HepG2 (cell line): ENCODE measurements at regions of chr6 and their contacts with region 1.

Region 1: GRCh38 chr6:37232430-37233017 is 25.0 kb upstream of the TBC1D22B start:
- DNase-seq: no peak
- ATAC-seq: no peak
- H3K4me3 ChIP-seq: no peak overlapping the region
- H3K27ac ChIP-seq: no peak overlapping the region
- H3K4me1 ChIP-seq: peaks cover 12% of the 10 kb centered on the region
- H3K27me3 ChIP-seq: no peaks in the 10 kb centered on the region
- CTCF ChIP-seq: no peak
- EP300 ChIP-seq: no peak
- POLR2A ChIP-seq: no peak
- RAD21 ChIP-seq: no peak

Region 2: DNA sequence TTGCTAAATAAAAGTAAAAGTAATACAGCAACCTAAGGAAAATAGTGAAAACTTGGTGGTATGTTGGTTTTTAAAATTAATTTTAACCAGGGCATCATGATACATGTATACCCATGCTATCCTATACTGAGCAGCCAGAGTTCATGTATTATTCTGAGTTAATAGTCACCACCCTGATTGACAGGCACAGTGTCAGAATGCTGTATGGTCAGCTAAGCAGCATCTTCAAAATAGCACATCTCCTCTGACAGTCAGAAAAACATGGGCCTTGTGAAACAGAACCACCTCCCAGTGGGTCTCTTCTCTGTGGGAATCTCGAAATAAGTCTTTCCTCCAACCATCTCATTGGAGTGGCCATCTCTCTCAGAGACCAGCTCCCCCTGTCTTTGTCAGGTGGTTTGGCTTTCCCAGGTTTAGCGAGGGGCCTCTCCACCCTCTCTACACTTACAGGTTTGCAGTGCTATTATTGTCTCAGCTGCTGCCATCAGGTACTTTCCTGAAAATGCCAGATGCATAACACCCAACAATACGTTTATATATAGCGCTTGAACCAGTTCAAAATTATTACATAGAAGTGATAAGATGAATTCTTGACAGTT is 74.2 kb after region 1 on chr6:
- CTCF ChIA-PET with region 1: no interaction called
- POLR2A ChIA-PET with region 1: no interaction called
- in situ Hi-C with region 1: no loop called
- intact Hi-C with region 1: loop called (anchors 2 kb)
- DNase-seq: no peak
- ATAC-seq: no peak
- H3K4me3 ChIP-seq: no peak overlapping the region
- H3K27ac ChIP-seq: no peak overlapping the region
- H3K4me1 ChIP-seq: no peaks in the 10 kb centered on the region
- H3K27me3 ChIP-seq: no peaks in the 10 kb centered on the region
- CTCF ChIP-seq: no peak
- EP300 ChIP-seq: no peak
- POLR2A ChIP-seq: no peak
- RAD21 ChIP-seq: no peak

Region 3: DNA sequence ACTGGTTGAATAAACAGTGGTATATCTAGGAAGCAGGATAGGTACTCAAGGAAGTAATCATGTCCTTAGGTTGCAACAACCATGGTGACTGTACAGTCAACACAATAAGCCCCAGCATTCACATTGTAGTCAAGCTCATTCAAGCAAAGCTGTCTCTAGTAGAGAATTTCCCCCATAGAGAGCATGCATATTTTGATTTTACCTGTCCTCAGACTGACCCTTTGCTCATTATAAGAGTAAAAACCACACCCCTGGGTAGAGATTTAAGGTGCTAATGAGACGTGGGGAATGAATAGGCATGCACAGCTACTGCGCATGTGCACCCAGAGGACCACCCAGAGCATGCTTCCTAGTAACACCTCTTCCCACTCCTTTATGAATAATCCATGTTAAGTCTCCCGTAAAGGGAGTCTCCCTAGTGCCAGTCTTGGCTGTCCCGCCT is 115.2 kb after region 1 on chr6:
- CTCF ChIA-PET with region 1: no interaction called
- POLR2A ChIA-PET with region 1: no interaction called
- in situ Hi-C with region 1: no loop called
- intact Hi-C with region 1: no loop called
- DNase-seq: no peak
- ATAC-seq: no peak
- H3K4me3 ChIP-seq: no peak overlapping the region
- H3K27ac ChIP-seq: no peak overlapping the region
- H3K4me1 ChIP-seq: no peaks in the 10 kb centered on the region
- H3K27me3 ChIP-seq: no peaks in the 10 kb centered on the region
- CTCF ChIP-seq: no peak
- EP300 ChIP-seq: no peak
- POLR2A ChIP-seq: no peak
- RAD21 ChIP-seq: no peak

Region 4: DNA sequence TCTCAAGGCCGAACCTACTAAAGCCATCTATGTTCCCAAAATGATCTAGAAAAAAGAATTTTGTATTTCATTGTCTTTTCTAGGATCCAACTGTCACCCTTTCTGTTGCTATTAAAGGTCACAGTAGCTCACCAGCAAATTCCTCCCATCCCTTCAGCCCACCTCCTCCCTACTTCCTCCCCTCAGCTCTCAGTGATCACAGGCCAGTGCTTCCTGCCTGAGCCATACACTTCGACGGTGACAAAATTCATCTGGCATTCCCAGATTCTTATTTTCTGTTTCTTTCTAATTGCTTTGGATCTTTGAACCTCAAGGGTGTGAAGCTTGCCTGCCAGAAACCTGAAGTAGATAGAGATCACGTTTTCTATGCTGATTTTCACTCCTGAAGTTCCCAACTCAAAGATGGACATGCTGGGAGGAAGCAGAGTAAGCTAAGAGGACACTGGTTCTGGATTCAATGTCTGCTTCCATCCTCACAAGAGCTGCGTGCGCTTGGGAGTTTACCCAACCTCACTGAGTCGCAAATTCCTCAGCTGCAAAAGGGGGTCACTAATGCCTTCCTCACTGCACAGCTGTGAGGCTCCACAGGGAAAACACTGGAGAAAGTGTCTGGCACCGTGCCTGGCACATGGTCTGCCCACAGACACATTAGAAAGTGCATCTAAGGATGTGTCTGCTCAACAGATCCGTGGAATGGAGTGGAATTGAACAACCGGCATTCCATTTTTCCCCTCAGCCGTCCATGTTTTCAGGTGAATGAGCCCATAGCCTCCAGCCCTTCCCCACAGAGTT is 430.7 kb after region 1 on chr6:
- CTCF ChIA-PET with region 1: no interaction called
- POLR2A ChIA-PET with region 1: no interaction called
- in situ Hi-C with region 1: no loop called
- intact Hi-C with region 1: no loop called
- DNase-seq: no peak
- ATAC-seq: no peak
- H3K4me3 ChIP-seq: no peak overlapping the region
- H3K27ac ChIP-seq: no peak overlapping the region
- H3K4me1 ChIP-seq: 0 out of 2 replicates have a peak, but pooled peaks cover 6% of the 10 kb centered on the region
- H3K27me3 ChIP-seq: peaks cover 0 to 9% of the 10 kb centered on the region in 2 experiments; a peak in 1 of 5 replicates
- CTCF ChIP-seq: no peak
- EP300 ChIP-seq: no peak
- POLR2A ChIP-seq: no peak
- RAD21 ChIP-seq: no peak